IMR-90 (cell line): ENCODE measurements at regions of chr10 and their contacts with region 1.

Region 1: GRCh38 chr10:17847585-17848296 is 38.6 kb downstream of the MRC1 start:
- DNase-seq: peak; percentile 34
- ATAC-seq: peak; percentile 51
- H3K4me3 ChIP-seq: no peak overlapping the region
- H3K27ac ChIP-seq: no peak overlapping the region
- H3K4me1 ChIP-seq: no peaks in the 10 kb centered on the region
- H3K27me3 ChIP-seq: peaks cover 14% of the 10 kb centered on the region
- CTCF ChIP-seq: peak; percentile 64
- POLR2A ChIP-seq: no peak
- RAD21 ChIP-seq: peak; percentile 69

Region 2: GRCh38 chr10:17607603-17608332 is 240.0 kb before region 1 on chr10:
- CTCF ChIA-PET with region 1: no interaction called
- POLR2A ChIA-PET with region 1: no interaction called
- dilution Hi-C with region 1: no loop called
- in situ Hi-C with region 1: no loop called
- intact Hi-C with region 1: loop called (anchors 5 kb)
- DNase-seq: peak; percentile 68
- ATAC-seq: peak; percentile 94
- H3K4me3 ChIP-seq: no peak overlapping the region
- H3K27ac ChIP-seq: no peak overlapping the region
- H3K4me1 ChIP-seq: no peaks in the 10 kb centered on the region
- H3K27me3 ChIP-seq: no peaks in the 10 kb centered on the region
- CTCF ChIP-seq: peak; percentile 97
- POLR2A ChIP-seq: no peak
- RAD21 ChIP-seq: peak; percentile 94

Region 3: GRCh38 chr10:18104223-18104872 is 256.6 kb after region 1 on chr10:
- CTCF ChIA-PET with region 1: interaction called, 3 read pairs
- POLR2A ChIA-PET with region 1: no interaction called
- dilution Hi-C with region 1: no loop called
- in situ Hi-C with region 1: no loop called
- intact Hi-C with region 1: loop called (anchors 1 kb)
- DNase-seq: peak; percentile 43
- ATAC-seq: peak; percentile 44; the same call in 1 of the 2 replicates
- H3K4me3 ChIP-seq: no peak overlapping the region
- H3K27ac ChIP-seq: no peak overlapping the region
- H3K4me1 ChIP-seq: no peaks in the 10 kb centered on the region
- H3K27me3 ChIP-seq: peaks cover 32% of the 10 kb centered on the region
- CTCF ChIP-seq: peak; percentile 64
- POLR2A ChIP-seq: no peak
- RAD21 ChIP-seq: peak; percentile 65

Region 4: DNA sequence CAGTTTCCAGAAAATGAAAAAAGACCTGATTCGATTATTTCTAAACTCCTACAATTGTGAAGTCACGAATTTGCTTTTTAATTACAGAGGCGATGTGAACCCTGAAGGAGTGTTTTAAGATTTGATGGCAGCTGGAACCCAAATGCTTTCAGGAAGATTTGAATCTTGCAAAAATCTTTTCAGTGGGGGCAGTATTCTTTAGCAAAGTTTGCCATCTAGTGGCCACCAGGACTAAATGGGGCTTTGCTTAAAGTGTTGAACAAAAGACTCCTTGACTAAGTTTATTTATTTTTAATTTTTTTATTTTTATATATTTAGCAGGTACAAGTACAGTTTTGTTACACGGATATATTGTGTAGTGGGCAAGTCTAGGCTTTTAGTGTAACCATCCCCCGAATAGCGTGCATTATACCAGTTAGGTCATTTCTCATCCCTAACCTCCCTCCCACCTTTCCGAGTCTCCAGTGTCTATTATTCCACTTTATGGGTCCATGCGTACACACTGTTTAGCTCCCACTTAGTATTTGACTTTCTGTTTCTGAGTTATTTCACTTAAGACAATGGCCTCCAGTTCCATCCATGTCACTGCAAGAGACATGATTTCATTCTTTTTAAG is 391.2 kb after region 1 on chr10:
- CTCF ChIA-PET with region 1: no interaction called
- POLR2A ChIA-PET with region 1: no interaction called
- dilution Hi-C with region 1: no loop called
- in situ Hi-C with region 1: no loop called
- intact Hi-C with region 1: loop called (anchors 1 kb)
- DNase-seq: peak; percentile 70
- ATAC-seq: peak; percentile 84
- H3K4me3 ChIP-seq: no peak overlapping the region
- H3K27ac ChIP-seq: no peak overlapping the region
- H3K4me1 ChIP-seq: peaks cover 2% of the 10 kb centered on the region; the same call in 1 of the 2 replicates
- H3K27me3 ChIP-seq: peaks cover 2% of the 10 kb centered on the region; the same call in 1 of the 2 replicates
- CTCF ChIP-seq: peak; percentile 77
- POLR2A ChIP-seq: no peak
- RAD21 ChIP-seq: peak; percentile 84

Region 5: GRCh38 chr10:18312374-18313139 is 464.8 kb after region 1 on chr10:
- CTCF ChIA-PET with region 1: no interaction called
- POLR2A ChIA-PET with region 1: no interaction called
- dilution Hi-C with region 1: no loop called
- in situ Hi-C with region 1: no loop called
- intact Hi-C with region 1: loop called (anchors 2 kb)
- DNase-seq: peak; percentile 62
- ATAC-seq: peak; percentile 90
- H3K4me3 ChIP-seq: no peak overlapping the region
- H3K27ac ChIP-seq: no peak overlapping the region
- H3K4me1 ChIP-seq: no peaks in the 10 kb centered on the region
- H3K27me3 ChIP-seq: no peaks in the 10 kb centered on the region; the same call in 1 of the 2 replicates
- CTCF ChIP-seq: peak; percentile 51
- POLR2A ChIP-seq: no peak
- RAD21 ChIP-seq: peak; percentile 60

Region 6: GRCh38 chr10:18400201-18400905 is 552.6 kb after region 1 on chr10:
- CTCF ChIA-PET with region 1: no interaction called
- POLR2A ChIA-PET with region 1: no interaction called
- dilution Hi-C with region 1: no loop called
- in situ Hi-C with region 1: no loop called
- intact Hi-C with region 1: no loop called
- DNase-seq: peak; percentile 3
- ATAC-seq: peak; percentile 68; the same call in 1 of the 2 replicates
- H3K4me3 ChIP-seq: peak overlapping the region; percentile 24
- H3K27ac ChIP-seq: no peak overlapping the region
- H3K4me1 ChIP-seq: peaks cover 7% of the 10 kb centered on the region
- H3K27me3 ChIP-seq: peaks cover 3% of the 10 kb centered on the region
- CTCF ChIP-seq: no peak
- POLR2A ChIP-seq: no peak
- RAD21 ChIP-seq: no peak